Esophagus muscularis mucosa (tissue), 4 donors: ENCODE measurements at regions of chr9 and their contacts with region 1.

Region 1: GRCh38 chr9:2809691-2810433 is 34.0 kb downstream of the PUM3 start:
- DNase-seq: no peak
- H3K4me3 ChIP-seq: peak overlapping the region in 1 of 4 donors; percentile 10
- H3K27ac ChIP-seq: peak overlapping the region; percentile 58 to 75 (median 66)
- H3K4me1 ChIP-seq: peaks cover 25 to 36% (median 34%) of the 10 kb centered on the region in 4 donors
- H3K27me3 ChIP-seq: no peaks in the 10 kb centered on the region
- CTCF ChIP-seq: no peak
- EP300 ChIP-seq: no peak
- POLR2A ChIP-seq: no peak

Region 2: DNA sequence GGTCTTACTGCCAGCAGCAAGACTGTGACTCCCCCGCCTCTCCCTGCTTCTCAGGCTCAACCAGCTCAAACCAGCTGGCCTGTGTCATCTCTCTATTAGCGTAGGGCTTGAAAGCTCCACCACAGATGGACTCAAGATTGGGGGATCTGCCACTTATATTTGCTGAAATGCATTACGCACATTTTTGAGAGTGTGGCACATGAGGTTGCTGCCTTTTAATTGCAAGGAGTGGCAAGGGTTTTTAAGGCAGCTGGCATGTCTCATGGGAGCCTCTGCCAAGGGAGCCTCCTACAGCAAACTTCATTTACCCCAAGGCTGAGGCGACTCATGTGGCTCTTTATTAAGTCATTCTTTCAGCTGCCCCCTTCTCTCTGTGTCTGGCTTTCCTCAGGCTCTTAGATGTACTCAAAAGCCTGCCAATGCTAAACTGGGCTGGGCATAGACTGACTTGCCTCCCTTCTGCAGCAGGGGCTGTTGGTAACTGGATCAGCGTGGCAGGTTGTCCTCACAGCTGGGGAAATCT is 575.4 kb before region 1 on chr9:
- intact Hi-C with region 1: loop called (anchors 10 kb)
- DNase-seq: no peak
- H3K4me3 ChIP-seq: no peak overlapping the region
- H3K27ac ChIP-seq: no peak overlapping the region
- H3K4me1 ChIP-seq: peaks cover 0 to 10% (median 9%) of the 10 kb centered on the region in 4 donors
- H3K27me3 ChIP-seq: no peaks in the 10 kb centered on the region
- CTCF ChIP-seq: no peak
- EP300 ChIP-seq: no peak
- POLR2A ChIP-seq: no peak